AG04450 (cell line): ENCODE measurements at regions of chr4 and their contacts with region 1.

Region 1: DNA sequence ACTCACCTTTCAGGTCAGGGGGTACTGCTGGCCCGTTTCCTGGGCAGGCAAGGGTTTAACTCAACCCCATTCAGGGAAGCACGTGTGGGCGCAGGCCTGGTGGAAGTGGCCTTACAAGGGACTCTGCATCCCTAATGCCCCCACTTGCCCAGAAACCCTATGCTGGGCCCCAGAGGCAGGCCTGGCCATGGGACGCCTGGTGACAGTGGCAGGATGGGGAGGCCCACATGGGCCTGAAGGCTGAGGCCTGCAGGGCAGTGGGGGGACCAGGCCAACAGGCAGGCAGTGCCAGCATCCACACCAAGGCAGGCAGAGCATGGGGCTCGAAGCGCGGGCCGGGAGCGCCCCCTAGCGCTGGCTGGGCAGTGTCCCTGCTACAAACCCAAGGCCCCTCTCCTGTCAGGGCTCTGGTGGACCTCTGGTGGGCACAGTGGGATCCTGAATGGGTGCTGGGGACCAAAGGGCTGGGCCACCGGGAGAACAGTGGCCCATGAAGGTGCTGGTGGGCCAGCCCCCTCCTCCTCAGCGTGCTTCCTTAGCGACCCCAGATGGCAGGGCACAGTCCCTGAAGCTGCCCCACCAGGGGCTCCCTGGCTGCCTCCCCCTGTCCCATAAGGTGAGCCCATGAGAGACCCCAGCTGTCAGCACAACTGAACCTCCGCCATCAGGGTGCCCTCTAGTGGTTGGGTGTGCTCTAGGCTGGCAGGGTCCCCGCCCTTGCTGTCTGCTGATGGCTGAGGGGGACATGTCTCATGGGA is 16.8 kb downstream of the FGFR3 start:
- DNase-seq: peak; percentile 24
- H3K4me3 ChIP-seq: no peak overlapping the region
- H3K27ac ChIP-seq: no peak overlapping the region
- H3K27me3 ChIP-seq: no peaks in the 10 kb centered on the region
- CTCF ChIP-seq: peak; percentile 81

Region 2: DNA sequence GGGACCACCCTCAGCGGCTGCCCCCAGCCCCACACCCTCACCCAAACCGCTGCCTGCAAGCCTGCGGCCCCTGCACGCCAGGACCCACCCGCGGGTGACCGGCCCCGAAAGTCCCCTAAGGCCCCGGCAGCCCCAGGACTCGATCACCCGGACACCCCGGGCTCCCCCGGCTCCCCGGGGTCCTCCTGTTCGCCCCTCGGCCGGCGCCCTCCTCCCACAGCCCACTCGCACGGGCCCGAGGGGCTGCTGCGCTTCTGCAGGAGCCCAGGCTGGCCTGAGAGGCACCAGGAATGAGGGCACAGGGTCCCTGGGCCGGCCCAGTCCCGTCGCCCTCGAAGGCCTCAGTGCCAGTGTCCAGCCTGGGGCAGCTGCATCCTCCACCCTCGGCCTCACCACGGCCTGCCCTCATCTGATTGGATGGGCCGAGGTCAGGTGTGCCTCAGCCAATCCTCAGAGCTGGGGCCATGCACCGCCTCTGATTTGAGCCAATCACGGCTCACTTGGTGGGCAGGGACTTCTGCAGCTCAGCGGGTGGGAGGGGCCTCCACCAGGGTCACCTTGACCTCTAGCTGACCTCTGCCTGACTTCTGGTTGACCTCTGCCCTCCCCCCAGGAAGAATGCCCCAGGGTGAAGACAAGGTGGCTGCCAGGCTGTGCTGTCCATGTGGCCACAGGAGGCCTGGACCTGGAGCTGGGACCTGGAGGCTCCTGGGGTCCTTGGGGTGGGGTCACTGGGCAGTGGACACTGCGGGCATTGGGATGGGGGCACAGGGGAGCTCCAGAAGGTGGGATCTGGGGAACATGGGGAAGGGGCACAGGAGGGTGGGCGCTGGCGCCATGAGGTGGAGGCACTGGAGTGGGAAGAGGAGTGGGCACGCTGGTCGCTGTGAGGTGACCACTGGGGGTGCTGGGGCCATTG is 306.1 kb before region 1 on chr4:
- CTCF ChIA-PET with region 1: no interaction called
- POLR2A ChIA-PET with region 1: no interaction called
- DNase-seq: no peak
- H3K4me3 ChIP-seq: no peak overlapping the region
- H3K27ac ChIP-seq: no peak overlapping the region
- H3K27me3 ChIP-seq: peaks cover 18% of the 10 kb centered on the region
- CTCF ChIP-seq: no peak

Region 3: DNA sequence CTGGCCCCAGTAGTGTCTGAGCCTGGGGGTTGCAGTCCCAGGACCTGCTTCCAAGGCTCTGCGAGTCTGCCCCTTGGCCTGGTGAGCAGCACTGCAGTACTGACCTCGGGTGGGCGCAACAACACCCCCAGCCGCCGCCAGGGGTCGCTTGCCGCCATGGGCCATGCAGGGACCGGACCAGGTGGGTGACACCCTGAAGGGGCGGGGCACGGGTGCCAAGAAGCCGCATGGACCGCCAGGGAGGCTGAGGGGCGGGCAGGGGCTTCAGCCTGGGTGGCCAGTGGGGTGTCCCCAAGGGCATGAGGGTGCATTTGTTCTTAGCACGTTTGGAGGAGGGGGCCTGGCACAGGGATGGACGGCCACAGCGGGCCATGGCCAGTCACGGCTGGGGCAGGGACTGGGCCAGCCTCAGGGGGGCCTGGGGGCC is 63.7 kb before region 1 on chr4:
- CTCF ChIA-PET with region 1: interaction called, 33 read pairs
- POLR2A ChIA-PET with region 1: no interaction called
- DNase-seq: no peak
- H3K4me3 ChIP-seq: no peak overlapping the region
- H3K27ac ChIP-seq: no peak overlapping the region
- H3K27me3 ChIP-seq: no peaks in the 10 kb centered on the region
- CTCF ChIP-seq: peak; percentile 86

Region 4: GRCh38 chr4:1752284-1753041 is 57.5 kb before region 1 on chr4:
- CTCF ChIA-PET with region 1: interaction called, 33 read pairs
- POLR2A ChIA-PET with region 1: no interaction called
- DNase-seq: no peak
- H3K4me3 ChIP-seq: no peak overlapping the region
- H3K27ac ChIP-seq: no peak overlapping the region
- H3K27me3 ChIP-seq: no peaks in the 10 kb centered on the region
- CTCF ChIP-seq: no peak